GM10248 (cell line): ENCODE measurements at regions of chr1 and their contacts with region 1.

Region 1: DNA sequence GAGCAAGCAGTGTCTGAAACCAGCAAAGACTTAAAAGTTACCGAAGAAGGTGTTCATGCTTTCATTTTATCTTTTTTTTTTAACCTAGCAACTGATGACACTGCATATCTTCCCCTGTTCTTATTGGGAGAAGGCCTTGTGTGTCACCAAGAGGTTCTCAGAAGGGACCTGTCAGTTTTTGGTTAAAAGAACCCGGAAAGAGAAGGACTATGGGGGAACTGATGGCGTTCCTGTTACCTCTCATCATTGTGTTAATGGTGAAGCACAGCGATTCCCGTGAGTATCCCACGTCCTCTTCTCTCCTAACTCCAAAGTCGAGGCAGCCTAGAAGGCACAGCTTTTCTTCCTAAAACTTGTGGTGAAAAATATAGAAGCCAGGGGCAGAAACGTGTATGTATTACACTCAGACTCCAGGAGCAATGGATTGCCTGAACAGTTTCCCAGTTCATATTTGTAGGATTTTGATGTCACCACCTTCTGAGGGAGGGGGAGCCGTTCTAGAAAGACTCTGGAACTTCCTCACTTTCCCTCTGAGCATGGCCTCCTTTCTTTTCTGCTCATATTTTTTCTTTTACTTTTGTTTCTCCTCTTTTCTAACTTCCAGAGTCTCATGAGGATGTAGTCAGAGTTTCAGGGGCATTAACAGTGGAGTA is at the start of gene MR1:
- DNase-seq: peak; percentile 86
- CTCF ChIP-seq: no peak

Region 2: DNA sequence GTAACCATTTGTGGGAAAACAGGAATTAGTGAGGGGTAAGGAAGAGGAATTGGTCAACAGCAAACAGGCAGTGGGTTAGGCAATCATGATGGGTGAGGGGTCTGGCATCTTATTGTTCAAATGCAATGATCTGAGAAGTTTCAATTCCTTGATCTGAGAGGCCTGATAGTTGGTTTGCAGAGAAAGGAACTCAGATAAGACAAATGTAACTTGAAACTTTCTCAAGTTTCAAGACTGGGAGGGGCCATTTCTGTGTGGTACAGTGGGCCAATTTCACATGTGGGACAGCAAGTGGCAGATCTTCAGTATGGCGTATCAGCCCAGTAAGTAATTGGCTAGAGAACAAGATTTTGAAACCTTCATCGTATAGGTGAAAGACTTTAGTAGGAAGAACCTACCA is 299.6 kb before region 1 on chr1:
- CTCF ChIA-PET with region 1: no interaction called
- POLR2A ChIA-PET with region 1: no interaction called
- DNase-seq: no peak
- CTCF ChIP-seq: no peak

Region 3: DNA sequence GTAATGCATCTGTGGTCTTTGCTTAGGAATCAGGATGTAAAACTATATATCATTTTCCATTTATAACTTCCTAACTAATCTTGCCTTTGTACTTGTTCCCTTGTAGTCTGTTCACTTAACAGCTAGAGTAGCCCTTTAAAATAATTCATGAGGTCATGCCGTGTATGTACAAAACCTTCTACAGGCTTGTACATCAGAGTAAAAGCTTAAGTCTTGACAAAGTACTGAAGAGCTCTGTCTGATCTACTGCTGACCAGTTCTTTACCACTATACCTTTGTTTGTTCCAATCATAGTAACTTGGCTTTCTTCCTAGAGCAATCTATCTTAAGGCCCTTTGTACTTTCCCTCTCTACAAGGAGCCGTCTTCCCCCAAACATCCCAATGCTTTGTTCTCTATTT is 212.0 kb before region 1 on chr1:
- CTCF ChIA-PET with region 1: no interaction called
- POLR2A ChIA-PET with region 1: no interaction called
- DNase-seq: no peak
- CTCF ChIP-seq: no peak

Region 4: GRCh38 chr1:181021811-181022434 is 12.0 kb before region 1 on chr1:
- CTCF ChIA-PET with region 1: interaction called, 86 read pairs
- POLR2A ChIA-PET with region 1: interaction called, 9 read pairs
- DNase-seq: peak; percentile 76
- CTCF ChIP-seq: no peak

Region 5: GRCh38 chr1:181057079-181057478 is 23.2 kb after region 1 on chr1:
- CTCF ChIA-PET with region 1: interaction called, 69 read pairs
- POLR2A ChIA-PET with region 1: no interaction called
- DNase-seq: no peak
- CTCF ChIP-seq: no peak

Region 6: DNA sequence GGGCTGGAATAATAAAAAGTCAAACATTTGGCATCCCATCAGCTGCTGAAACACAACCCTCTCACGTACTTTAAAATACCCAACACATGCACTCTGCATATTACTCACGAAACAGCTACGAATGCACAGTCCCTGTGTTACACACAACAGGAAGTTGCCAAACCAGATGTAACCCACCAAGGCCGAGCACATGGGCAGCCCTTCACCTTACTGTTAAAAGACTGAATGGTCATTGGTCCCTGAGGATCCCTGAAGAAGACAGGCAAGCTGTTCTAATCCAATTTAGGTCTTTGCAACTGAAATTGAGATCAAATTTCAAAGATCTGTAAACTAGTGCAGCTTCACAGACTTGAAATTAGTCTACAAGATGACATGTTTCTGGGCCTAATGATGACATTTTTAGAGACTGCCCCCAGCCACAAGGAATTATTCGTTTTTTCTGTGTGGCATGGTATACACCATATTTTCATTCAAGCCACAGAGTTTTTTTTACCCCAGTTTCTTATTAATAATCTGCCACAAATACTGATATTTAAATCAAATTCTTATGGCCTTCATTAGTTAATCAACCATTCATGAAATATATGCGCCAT is 29.0 kb after region 1 on chr1:
- CTCF ChIA-PET with region 1: interaction called, 69 read pairs
- POLR2A ChIA-PET with region 1: no interaction called
- DNase-seq: peak; percentile 58
- CTCF ChIP-seq: no peak

Region 7: DNA sequence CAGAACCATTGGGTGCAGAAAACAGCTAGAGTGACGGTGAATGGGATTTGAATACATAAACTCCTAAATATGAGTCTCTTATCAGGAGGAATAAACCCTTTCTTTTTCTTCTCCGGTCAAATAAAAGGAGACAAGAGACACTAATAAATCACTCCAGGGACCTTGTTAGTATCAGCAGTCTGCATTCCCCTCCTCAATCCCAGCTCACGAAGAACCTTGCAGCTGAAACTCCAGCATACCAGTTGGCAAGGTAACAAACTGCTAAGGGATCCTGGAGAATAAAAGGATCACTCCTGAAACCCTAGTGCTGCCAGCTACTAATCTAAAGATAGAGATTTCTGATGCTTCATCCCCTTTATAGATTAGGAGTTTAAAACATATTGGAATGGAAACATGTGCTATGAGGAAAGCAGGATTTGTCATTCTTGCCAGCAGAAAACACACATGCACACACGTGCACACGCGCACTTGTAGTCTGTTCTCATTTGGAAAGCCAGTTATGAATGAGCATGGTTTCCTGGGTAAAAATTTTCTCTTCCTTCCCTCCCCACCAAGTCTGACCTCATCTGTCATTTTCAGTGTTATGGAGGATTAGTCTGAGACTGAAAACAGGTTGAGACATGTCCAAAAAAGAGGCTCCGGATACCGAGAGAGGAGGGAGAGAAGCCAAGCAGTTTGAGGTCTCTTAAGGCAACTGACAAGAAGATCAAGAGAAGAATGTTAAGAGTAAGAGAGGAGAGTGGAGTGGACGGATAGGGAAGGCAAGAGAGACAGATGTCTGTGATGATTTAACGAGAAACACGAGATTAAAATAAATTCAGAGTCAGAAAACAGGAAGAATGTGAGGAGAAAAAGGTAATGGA is 65.5 kb after region 1 on chr1:
- CTCF ChIA-PET with region 1: interaction called, 17 read pairs
- POLR2A ChIA-PET with region 1: interaction called, 3 read pairs
- DNase-seq: peak; percentile 48
- CTCF ChIP-seq: no peak

Region 8: DNA sequence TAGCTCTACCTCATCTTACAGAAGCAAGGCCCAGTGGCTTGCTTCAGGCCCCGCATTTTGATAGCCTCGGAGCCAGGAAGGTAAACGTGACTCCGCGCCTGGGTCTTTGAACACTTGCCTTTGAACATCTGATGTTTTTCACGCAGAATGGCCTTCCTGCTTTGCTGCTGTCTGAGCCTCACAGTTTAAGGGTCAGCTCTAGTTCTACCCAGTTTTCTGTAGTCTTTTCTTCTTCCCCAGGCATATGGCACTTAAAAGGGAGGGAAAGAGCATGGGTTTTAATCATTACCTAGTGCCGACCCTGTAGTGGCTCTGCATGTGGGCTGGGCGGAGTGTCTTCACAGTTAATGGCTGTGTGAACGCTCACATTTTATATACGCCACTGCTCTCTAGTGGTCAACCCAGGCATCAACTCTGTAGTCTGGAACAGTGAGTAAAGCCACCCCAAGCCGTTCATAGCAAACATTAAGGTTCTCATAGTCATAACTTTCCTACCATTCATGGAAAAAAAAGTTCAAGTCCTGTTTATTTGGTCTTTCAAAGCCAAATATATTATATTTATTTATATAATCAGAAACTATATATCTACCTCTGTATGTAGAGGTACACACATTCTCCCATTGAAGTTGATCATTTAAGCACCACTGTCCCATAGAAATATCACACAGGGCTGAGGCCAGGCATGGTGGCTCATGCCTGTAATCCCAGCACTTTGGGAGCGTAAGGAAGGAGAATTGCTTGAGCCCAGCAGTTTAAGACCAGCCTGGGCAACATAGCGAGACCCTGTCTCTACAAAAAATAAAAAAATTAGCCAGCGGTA is 132.7 kb after region 1 on chr1:
- CTCF ChIA-PET with region 1: interaction called, 34 read pairs
- POLR2A ChIA-PET with region 1: no interaction called
- DNase-seq: peak; percentile 79
- CTCF ChIP-seq: peak; percentile 86